ENCODE measurements at regions of chr20 and their contacts with region 1.

Region 1: GRCh38 chr20:25178563-25179438 is 16.7 kb upstream of the ENTPD6 start:
- DNase-seq: no peak
- H3K4me3 ChIP-seq: no peak overlapping the region
- H3K27ac ChIP-seq: peak overlapping the region in 2 of 4 donors; percentile 22 to 72
- H3K4me1 ChIP-seq: peaks cover 0 to 9% (median 0%) of the 10 kb centered on the region in 4 donors
- H3K27me3 ChIP-seq: no peaks in the 10 kb centered on the region
- CTCF ChIP-seq: peak; percentile 66 to 80 (median 70)
- EP300 ChIP-seq: no peak
- POLR2A ChIP-seq: no peak

Region 2: DNA sequence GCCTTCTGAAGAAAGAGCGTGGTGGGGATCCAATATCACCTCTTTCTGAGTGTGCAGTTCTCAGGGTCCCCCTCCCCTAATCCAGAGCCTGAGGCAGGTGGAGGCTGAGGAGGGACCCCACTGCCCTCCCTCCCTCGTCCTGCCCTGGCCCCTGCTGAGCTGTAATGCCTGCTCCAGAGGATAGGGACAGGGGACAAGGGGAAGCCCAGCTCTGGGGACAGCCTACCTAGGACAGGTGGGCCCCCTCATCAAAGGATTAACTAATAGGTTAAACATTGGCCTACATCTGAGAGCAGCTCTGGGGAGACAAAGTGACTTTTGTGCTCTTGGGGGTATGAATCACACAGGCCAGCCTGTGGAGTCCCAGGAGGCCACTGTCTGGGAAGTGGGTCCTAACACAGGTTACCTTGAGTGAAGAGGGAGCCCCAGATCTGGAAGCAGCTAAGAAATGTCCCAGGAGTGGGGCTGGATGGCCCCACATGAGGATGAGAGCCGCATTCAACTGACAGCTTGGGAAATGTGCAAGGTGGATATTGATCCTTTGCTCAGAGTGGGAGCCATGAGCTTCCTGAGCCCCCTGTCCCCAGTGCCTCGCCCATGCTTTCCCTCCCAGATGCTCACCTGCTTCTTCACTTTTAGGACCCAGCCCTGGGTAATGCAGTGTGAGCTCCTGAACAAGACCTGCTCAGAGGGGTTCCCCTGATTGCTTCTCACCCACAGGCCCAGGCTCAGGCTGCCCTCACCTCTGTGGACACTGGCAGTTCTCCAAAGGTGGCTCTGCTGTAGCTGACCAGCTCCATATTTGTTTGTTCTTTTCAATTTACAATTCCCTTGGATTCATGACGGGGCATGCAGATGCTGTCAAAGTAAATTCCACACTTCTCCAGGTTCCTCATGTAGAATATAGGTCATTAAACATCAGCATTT is 1592.7 kb before region 1 on chr20:
- in situ Hi-C with region 1: no loop called
- intact Hi-C with region 1: no loop called
- DNase-seq: no peak
- H3K4me3 ChIP-seq: no peak overlapping the region
- H3K27ac ChIP-seq: no peak overlapping the region
- H3K4me1 ChIP-seq: no peaks in the 10 kb centered on the region
- H3K27me3 ChIP-seq: no peaks in the 10 kb centered on the region
- CTCF ChIP-seq: no peak
- EP300 ChIP-seq: no peak
- POLR2A ChIP-seq: no peak

Region 3: GRCh38 chr20:24629668-24630067 is 549.1 kb before region 1 on chr20:
- in situ Hi-C with region 1: no loop called
- intact Hi-C with region 1: no loop called
- DNase-seq: no peak
- H3K4me3 ChIP-seq: no peak overlapping the region
- H3K27ac ChIP-seq: no peak overlapping the region
- H3K4me1 ChIP-seq: peaks cover 0 to 3% (median 0%) of the 10 kb centered on the region in 4 donors
- H3K27me3 ChIP-seq: no peaks in the 10 kb centered on the region
- CTCF ChIP-seq: no peak
- EP300 ChIP-seq: no peak
- POLR2A ChIP-seq: no peak

Region 4: GRCh38 chr20:24987244-24987643 is 191.6 kb before region 1 on chr20:
- in situ Hi-C with region 1: loop called in 2 of 4 experiments (anchors 10 to 25 kb)
- intact Hi-C with region 1: loop called (anchors 5 kb)
- DNase-seq: no peak
- H3K4me3 ChIP-seq: no peak overlapping the region
- H3K27ac ChIP-seq: no peak overlapping the region
- H3K4me1 ChIP-seq: peaks cover 9 to 42% (median 28%) of the 10 kb centered on the region in 4 donors
- H3K27me3 ChIP-seq: no peaks in the 10 kb centered on the region
- CTCF ChIP-seq: no peak
- EP300 ChIP-seq: no peak
- POLR2A ChIP-seq: no peak

Region 5: GRCh38 chr20:25081065-25081729 is 97.6 kb before region 1 on chr20:
- in situ Hi-C with region 1: no loop called
- intact Hi-C with region 1: loop called (anchors 10 kb)
- DNase-seq: no peak
- H3K4me3 ChIP-seq: no peak overlapping the region
- H3K27ac ChIP-seq: no peak overlapping the region
- H3K4me1 ChIP-seq: peaks cover 11 to 43% (median 23%) of the 10 kb centered on the region in 4 donors
- H3K27me3 ChIP-seq: peaks cover 93% of the 10 kb centered on the region
- CTCF ChIP-seq: no peak
- EP300 ChIP-seq: no peak
- POLR2A ChIP-seq: no peak

Region 6: GRCh38 chr20:25136643-25137559 is 41.9 kb before region 1 on chr20:
- in situ Hi-C with region 1: no loop called
- intact Hi-C with region 1: no loop called
- DNase-seq: peak; percentile 38
- H3K4me3 ChIP-seq: no peak overlapping the region
- H3K27ac ChIP-seq: peak overlapping the region in 1 of 4 donors; percentile 31
- H3K4me1 ChIP-seq: peaks cover 0 to 16% (median 5%) of the 10 kb centered on the region in 4 donors
- H3K27me3 ChIP-seq: peaks cover 5% of the 10 kb centered on the region
- CTCF ChIP-seq: no peak
- EP300 ChIP-seq: no peak
- POLR2A ChIP-seq: no peak

Measured in transverse colon (tissue), 4 donors.